ENCODE measurements at regions of chr1 and their contacts with region 1.

Region 1: GRCh38 chr1:20361806-20362640 is 71.3 kb downstream of the VWA5B1 start:
- DNase-seq: peak; percentile 60 to 74
- ATAC-seq: peak in 3 of 8 donors; percentile 32 to 50 (median 36)
- H3K4me3 ChIP-seq: no peak overlapping the region
- H3K27ac ChIP-seq: no peak overlapping the region
- H3K4me1 ChIP-seq: peaks cover 0 to 37% (median 16%) of the 10 kb centered on the region in 9 donors
- H3K27me3 ChIP-seq: peaks cover 0 to 58% (median 33%) of the 10 kb centered on the region in 7 donors
- CTCF ChIP-seq: peak; percentile 58 to 81 (median 74)

Region 2: DNA sequence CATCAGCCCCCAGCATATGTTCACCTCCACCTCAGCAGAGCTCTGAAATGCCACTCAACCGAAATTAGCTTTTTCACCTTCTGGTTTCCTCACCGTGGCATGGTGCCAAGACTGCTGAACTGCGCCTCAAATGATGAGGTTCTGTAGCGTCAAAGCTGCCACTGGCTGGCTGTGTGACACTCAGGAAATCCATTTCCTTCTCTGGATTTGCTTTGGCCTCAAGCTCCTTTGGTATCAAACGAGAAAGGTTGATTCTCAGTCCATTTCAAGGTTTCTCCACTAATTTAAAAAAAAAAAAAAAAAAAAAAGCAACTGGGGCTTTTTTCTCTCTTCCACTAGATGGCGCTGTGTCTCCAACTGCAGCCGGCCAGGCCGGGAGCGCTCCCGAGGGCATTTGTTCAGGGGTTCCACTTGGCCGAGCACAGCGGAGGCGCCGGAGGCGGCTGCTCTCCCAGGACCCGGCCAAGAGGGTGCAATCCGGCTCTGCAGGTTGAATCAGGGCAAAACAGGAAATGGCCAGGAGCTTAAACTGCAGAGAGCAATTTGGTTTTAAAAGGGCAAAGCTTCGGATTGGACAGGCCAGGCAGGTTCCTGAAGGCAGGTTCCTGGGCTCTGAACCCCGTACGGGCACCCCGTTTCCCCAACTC is 149.2 kb before region 1 on chr1:
- intact Hi-C with region 1: loop called in 1 of 10 experiments (anchors 10 kb)
- DNase-seq: peak; percentile 50 to 66
- ATAC-seq: peak; percentile 60 to 83 (median 70)
- H3K4me3 ChIP-seq: no peak overlapping the region
- H3K27ac ChIP-seq: no peak overlapping the region
- H3K4me1 ChIP-seq: peaks cover 0 to 11% (median 8%) of the 10 kb centered on the region in 9 donors
- H3K27me3 ChIP-seq: peaks cover 0 to 62% (median 40%) of the 10 kb centered on the region in 7 donors
- CTCF ChIP-seq: peak; percentile 75 to 88 (median 79)

Region 3: GRCh38 chr1:20223551-20224419 is 138.2 kb before region 1 on chr1:
- intact Hi-C with region 1: loop called in 2 of 10 experiments (anchors 10 kb)
- DNase-seq: no peak
- ATAC-seq: peak in 2 of 8 donors; percentile 34 to 37
- H3K4me3 ChIP-seq: no peak overlapping the region
- H3K27ac ChIP-seq: no peak overlapping the region
- H3K4me1 ChIP-seq: peaks cover 0 to 4% (median 0%) of the 10 kb centered on the region in 9 donors
- H3K27me3 ChIP-seq: peaks cover 0 to 52% (median 45%) of the 10 kb centered on the region in 7 donors
- CTCF ChIP-seq: no peak

Region 4: DNA sequence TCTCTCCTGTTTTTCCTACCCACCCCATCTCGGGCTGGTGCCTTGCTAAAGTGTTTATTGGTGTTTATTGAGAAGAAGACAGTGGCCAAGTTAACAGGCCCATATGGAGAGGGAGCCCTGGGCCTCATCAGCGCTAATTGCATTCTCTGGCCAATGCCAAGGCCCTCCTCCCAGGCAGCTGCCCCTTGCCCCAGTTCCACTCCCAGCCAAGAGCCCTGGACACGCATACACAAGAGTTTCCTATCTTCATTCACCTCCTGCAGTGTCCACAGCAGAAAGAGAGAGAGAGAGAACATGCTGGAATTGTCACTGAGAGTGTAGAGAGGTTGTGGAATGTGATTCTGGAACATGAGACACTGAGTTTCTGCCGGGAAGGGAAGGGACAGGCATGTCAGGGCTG is 96.8 kb before region 1 on chr1:
- intact Hi-C with region 1: loop called in 2 of 10 experiments (anchors 5 to 10 kb)
- DNase-seq: peak; percentile 47 to 57
- ATAC-seq: peak; percentile 74 to 98 (median 90)
- H3K4me3 ChIP-seq: no peak overlapping the region
- H3K27ac ChIP-seq: peak overlapping the region in 8 of 10 donors; percentile 26 to 81 (median 36)
- H3K4me1 ChIP-seq: peaks cover 0 to 16% (median 7%) of the 10 kb centered on the region in 9 donors
- H3K27me3 ChIP-seq: peaks cover 0 to 6% (median 0%) of the 10 kb centered on the region in 7 donors
- CTCF ChIP-seq: no peak

Region 5: DNA sequence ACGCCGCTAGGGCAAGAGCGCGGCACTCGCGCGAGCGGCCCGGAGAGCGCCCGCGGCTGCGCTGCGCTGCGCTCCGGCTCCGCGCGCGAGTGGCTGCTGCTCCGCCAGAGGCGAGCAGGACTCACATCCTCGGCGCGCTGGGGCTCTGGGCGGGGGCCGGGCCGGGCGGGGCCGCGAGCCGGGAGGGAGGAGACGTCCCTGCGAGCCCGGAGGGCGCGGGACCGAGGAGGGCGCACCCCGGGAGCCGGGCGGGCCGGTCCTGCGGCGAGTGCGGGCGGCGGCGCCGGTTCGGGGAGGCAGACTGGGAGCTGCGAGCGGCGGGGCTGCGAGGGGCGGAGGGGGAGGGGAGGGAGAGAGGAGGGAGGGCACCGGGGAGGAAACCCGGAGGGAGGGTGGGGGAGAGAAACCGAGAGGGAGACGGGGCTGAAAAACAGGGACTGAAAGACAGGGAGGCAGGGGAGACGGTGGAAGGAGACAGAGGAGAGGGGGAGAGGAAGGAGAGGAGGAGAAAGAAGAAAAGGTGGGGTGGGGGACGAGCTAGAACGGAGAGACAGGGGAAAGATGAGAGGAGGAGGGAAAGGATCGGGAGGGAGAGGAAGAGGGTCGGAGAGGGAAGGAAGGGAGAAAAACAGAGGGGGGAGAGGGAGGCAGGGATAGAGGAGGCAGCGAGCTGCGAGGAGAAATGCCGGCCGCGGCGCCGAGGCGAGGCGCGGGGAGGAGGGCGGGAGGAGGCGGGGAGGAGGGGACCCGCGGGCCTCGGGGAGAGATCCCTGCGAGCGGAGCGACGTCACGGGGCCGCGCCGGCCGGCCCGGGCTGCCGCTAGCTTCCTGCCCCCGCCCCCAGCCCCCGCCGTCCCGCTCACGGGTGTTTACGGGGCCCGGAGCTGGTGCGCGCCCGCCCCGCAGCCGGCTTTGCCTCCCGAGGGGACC is 123.8 kb after region 1 on chr1 and contains the start of gene CAMK2N1:
- intact Hi-C with region 1: loop called in 6 of 10 experiments (anchors 5 to 10 kb)
- DNase-seq: peak; percentile 79 to 80
- ATAC-seq: peak; percentile 74 to 88 (median 79)
- H3K4me3 ChIP-seq: peak within 1 kb of the TSS; percentile 40 to 71 (median 63)
- H3K27ac ChIP-seq: peak within 1 kb of the TSS; percentile 73 to 87 (median 80)
- H3K4me1 ChIP-seq: peaks cover 3 to 35% (median 17%) of the 10 kb centered on the region in 9 donors
- H3K27me3 ChIP-seq: peaks cover 15 to 79% (median 64%) of the 10 kb centered on the region in 7 donors
- CTCF ChIP-seq: no peak
- total RNA-seq, gene CAMK2N1: 4.0 to 12.9 (median 8.5) TPM